ENCODE measurements at regions of chr17 and their contacts with region 1.

Region 1: DNA sequence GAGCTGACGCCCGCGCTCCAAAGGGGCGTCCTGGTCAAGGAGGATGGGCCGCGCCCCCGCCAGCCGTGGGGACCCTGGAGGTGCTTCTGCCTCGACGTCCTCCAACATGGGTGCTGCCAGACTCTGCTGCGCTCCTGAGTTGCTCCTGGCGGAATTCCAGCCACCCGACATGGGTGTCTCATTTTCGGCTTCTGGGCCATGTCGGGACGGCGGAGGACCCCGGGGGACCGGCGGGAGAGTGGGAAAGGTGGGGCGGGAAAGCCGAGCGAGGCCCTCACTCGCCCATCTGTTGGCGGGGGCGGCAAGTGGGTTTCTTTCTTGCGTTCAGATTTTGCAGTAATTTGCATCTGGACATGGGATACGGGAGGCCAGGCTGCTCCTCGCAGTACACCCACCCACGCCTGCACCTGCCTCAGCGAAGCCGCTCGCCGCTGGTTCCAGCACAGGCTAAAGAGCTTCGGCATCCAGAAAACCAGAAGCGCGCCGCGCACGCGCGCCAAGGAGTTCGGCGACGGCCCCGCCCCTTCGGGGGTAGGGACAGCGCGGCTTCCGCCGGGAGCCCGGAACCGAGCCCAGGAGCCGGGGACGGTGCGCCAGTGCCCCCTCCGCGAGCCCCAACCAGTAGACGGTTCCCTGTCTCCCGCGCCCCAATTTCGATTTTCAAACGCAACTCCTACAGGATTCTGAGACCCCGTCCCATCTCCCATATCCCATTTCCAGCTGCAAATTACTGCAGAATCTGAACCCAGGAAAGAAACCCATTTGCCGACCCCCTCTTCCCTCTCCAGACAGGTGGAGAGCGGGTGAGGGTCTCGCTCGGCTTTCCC is at the start of gene ARMC7:
- DNase-seq: peak; percentile 91
- H3K4me3 Mint-ChIP-seq: peak within 1 kb of the TSS; percentile 86
- H3K27ac Mint-ChIP-seq: peak within 1 kb of the TSS; percentile 91
- H3K4me1 Mint-ChIP-seq: peaks cover 41% of the 10 kb centered on the region
- H3K27me3 Mint-ChIP-seq: no peaks in the 10 kb centered on the region
- total RNA-seq, gene ARMC7: 18.5 to 18.8 TPM

Region 2: DNA sequence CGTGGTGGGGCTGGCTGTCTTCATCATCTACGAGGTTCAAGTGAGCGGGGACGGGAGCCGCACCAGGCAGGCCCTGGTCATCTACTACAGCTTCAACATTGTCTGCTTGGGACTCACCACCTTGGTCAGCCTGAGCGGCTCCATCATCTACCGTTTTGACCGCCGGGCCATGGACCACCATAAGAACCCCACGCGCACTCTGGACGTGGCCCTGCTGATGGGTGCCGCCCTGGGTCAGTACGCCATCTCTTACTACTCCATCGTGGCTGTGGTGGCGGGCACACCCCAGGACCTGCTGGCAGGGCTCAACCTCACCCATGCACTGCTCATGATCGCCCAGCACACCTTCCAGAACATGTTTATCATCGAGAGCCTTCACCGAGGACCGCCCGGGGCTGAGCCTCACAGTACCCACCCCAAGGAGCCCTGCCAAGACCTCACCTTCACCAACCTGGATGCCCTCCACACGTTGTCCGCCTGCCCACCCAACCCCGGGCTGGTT is 179.0 kb before region 1 on chr17:
- CTCF ChIA-PET with region 1: no interaction called
- POLR2A ChIA-PET with region 1: no interaction called
- DNase-seq: no peak
- H3K4me3 Mint-ChIP-seq: no peak overlapping the region
- H3K27ac Mint-ChIP-seq: no peak overlapping the region
- H3K4me1 Mint-ChIP-seq: no peaks in the 10 kb centered on the region
- H3K27me3 Mint-ChIP-seq: peaks cover 71% of the 10 kb centered on the region

Region 3: GRCh38 chr17:74961657-74962490 is 147.7 kb before region 1 on chr17:
- CTCF ChIA-PET with region 1: interaction called, 10 read pairs
- POLR2A ChIA-PET with region 1: interaction called, 13 read pairs
- DNase-seq: peak; percentile 88
- H3K4me3 Mint-ChIP-seq: no peak overlapping the region
- H3K27ac Mint-ChIP-seq: no peak overlapping the region
- H3K4me1 Mint-ChIP-seq: peaks cover 4% of the 10 kb centered on the region
- H3K27me3 Mint-ChIP-seq: no peaks in the 10 kb centered on the region

Region 4: GRCh38 chr17:75006653-75007052 is 103.0 kb before region 1 on chr17:
- CTCF ChIA-PET with region 1: no interaction called
- POLR2A ChIA-PET with region 1: no interaction called
- DNase-seq: no peak
- H3K4me3 Mint-ChIP-seq: no peak overlapping the region
- H3K27ac Mint-ChIP-seq: no peak overlapping the region
- H3K4me1 Mint-ChIP-seq: peaks cover 4% of the 10 kb centered on the region
- H3K27me3 Mint-ChIP-seq: peaks cover 2% of the 10 kb centered on the region

Region 5: DNA sequence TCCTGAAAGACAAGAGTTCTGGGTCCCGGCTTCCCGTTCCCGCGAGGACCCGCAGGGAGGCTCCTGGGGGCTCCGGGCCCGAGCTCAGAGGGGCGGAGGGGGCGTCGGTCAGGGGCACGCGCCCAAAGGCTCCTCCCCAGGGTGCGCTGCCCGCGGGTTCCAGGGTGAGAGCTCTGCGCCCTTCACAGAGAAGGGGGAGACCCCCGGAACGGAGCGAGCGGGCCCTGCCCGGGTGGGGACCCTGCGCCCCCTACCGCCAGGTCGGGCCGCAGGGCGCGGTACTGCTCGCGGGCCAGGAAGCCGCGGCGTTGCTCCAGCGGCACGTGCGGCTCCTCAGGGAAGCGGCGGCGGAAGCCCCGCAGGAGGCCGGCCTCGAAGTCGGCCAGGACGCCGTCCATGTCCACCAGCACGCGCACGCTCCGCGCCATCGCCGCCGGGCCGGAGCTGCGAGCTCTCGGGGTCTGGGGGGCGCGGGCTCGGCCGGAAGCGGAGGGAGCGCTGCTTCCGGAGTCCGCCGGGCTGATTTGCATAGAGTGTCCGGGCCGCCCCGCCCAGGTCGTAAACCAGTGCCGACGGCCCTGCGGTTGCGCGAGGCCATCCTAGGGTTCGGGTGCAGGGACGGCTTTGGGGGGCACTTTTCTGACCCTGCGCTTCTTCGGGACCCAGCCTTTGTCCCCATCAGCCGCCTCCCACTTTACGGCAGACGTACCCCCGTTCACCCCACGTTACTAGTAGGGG is 21.8 kb after region 1 on chr17 and contains the start of gene NT5C:
- CTCF ChIA-PET with region 1: interaction called, 150 read pairs
- POLR2A ChIA-PET with region 1: interaction called, 3 read pairs
- DNase-seq: peak; percentile 68
- H3K4me3 Mint-ChIP-seq: peak within 1 kb of the TSS; percentile 83
- H3K27ac Mint-ChIP-seq: peak within 1 kb of the TSS; percentile 89
- H3K4me1 Mint-ChIP-seq: peaks cover 30% of the 10 kb centered on the region
- H3K27me3 Mint-ChIP-seq: no peaks in the 10 kb centered on the region
- total RNA-seq, gene NT5C: 45.2 to 50.4 TPM

Region 6: DNA sequence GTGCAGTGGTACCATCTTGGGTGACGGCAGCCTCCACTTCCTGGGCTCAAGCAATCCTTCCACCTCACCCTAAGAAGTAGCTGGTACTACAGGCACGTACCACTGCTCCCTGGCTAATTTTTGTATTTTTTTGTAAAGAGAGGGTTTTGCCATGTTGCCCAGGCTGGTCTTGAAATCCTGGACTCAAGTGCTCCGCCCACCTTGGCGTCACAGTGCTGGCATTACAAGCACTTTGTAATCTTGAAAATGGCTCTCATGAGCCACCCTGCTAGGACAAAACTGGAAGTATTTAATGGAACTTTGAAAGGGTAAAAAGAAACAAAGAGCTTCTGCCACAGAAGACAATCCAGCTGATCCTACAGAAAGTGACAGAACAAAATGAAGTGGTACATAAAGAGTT is 63.9 kb after region 1 on chr17:
- CTCF ChIA-PET with region 1: interaction called, 49 read pairs
- POLR2A ChIA-PET with region 1: interaction called, 4 read pairs
- DNase-seq: no peak
- H3K4me3 Mint-ChIP-seq: no peak overlapping the region
- H3K27ac Mint-ChIP-seq: peak overlapping the region; percentile 15
- H3K4me1 Mint-ChIP-seq: peaks cover 32% of the 10 kb centered on the region
- H3K27me3 Mint-ChIP-seq: no peaks in the 10 kb centered on the region

Region 7: GRCh38 chr17:75205037-75205792 is 95.6 kb after region 1 on chr17 and contains the start of gene NUP85:
- CTCF ChIA-PET with region 1: interaction called, 46 read pairs
- POLR2A ChIA-PET with region 1: interaction called, 4 read pairs
- DNase-seq: peak; percentile 93
- H3K4me3 Mint-ChIP-seq: peak within 1 kb of the TSS; percentile 98
- H3K27ac Mint-ChIP-seq: peak within 1 kb of the TSS; percentile 100
- H3K4me1 Mint-ChIP-seq: peaks cover 30% of the 10 kb centered on the region
- H3K27me3 Mint-ChIP-seq: no peaks in the 10 kb centered on the region
- total RNA-seq, gene NUP85: 140 to 172 TPM

Region 8: DNA sequence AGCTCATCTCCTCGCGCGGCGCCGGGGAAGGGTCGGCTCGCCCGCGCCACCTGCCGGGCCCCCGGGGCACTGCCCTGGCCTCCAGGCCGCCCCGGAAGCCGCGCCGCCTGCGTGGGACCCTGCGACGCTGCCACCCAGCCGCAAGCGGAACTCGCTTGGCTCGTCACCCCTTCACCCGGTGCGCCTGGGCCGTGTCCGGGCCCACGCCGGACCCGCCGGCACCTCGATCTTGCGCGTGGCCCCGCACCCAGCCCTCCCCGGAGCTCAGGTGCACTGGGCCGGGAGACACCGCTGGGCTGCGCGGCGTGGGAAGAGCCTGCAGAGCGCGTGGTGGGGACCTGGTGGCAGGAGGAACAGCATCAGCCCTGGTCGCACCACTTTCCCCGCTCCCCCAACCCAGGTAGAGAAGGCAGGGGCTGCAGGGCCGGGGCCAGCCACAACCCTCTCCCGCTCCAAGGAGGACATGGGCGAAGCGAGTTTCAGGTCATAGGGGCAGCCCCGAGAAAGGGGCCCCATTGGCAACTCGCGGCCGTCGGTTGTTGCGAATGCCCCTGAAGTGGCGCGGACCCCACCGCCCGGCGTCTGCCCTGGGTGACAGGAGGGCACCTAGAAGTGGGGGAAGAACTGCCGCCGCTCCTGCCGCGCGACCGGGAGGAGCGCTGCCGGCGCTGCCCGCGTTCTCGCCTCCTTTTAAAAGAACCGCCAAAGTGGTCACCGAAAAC is 161.8 kb after region 1 on chr17:
- CTCF ChIA-PET with region 1: interaction called, 10 read pairs
- POLR2A ChIA-PET with region 1: no interaction called
- DNase-seq: peak; percentile 85
- H3K4me3 Mint-ChIP-seq: peak overlapping the region; percentile 78
- H3K27ac Mint-ChIP-seq: peak overlapping the region; percentile 84
- H3K4me1 Mint-ChIP-seq: peaks cover 35% of the 10 kb centered on the region
- H3K27me3 Mint-ChIP-seq: no peaks in the 10 kb centered on the region

Region 9: GRCh38 chr17:75345514-75346167 is 236.0 kb after region 1 on chr17:
- CTCF ChIA-PET with region 1: no interaction called
- POLR2A ChIA-PET with region 1: no interaction called
- DNase-seq: peak; percentile 68
- H3K4me3 Mint-ChIP-seq: peak overlapping the region; percentile 65
- H3K27ac Mint-ChIP-seq: peak overlapping the region; percentile 87
- H3K4me1 Mint-ChIP-seq: peaks cover 90% of the 10 kb centered on the region
- H3K27me3 Mint-ChIP-seq: no peaks in the 10 kb centered on the region

Measured in activated CD4-positive, alpha-beta T cell treated with anti-CD3 and anti-CD28 coated beads, Interleukin-2, amount 10 ng/mL, durations not matched to agents 7 days and 5 days (primary cell).